Gastrocnemius medialis (tissue), 4 donors: ENCODE measurements at regions of chr16 and their contacts with region 1.

Region 1: GRCh38 chr16:67028555-67029248 is at the start of gene CBFB:
- DNase-seq: peak; percentile 86 to 90
- ATAC-seq: peak; percentile 87 to 88
- H3K4me3 ChIP-seq: peak within 1 kb of the TSS; percentile 70 to 92 (median 80)
- H3K27ac ChIP-seq: peak within 1 kb of the TSS; percentile 97 to 98 (median 98)
- H3K4me1 ChIP-seq: peaks cover 26 to 31% of the 10 kb centered on the region in 2 donors
- H3K27me3 ChIP-seq: no peaks in the 10 kb centered on the region
- CTCF ChIP-seq: peak in 1 of 5 experiments; percentile 4
- POLR2A ChIP-seq: peak; percentile 79 to 80
- total RNA-seq, gene CBFB: 38.9 to 105 (median 96.5) TPM

Region 2: GRCh38 chr16:66954097-66954659 is 74.5 kb before region 1 on chr16:
- in situ Hi-C with region 1: no loop called
- intact Hi-C with region 1: no loop called
- DNase-seq: peak; percentile 49 to 79
- ATAC-seq: peak; percentile 48 to 50
- H3K4me3 ChIP-seq: no peak overlapping the region
- H3K27ac ChIP-seq: peak overlapping the region; percentile 97 to 99 (median 97)
- H3K4me1 ChIP-seq: peaks cover 47 to 51% of the 10 kb centered on the region in 2 donors
- H3K27me3 ChIP-seq: no peaks in the 10 kb centered on the region
- CTCF ChIP-seq: peak; percentile 74 to 85 (median 81)
- POLR2A ChIP-seq: no peak

Region 3: DNA sequence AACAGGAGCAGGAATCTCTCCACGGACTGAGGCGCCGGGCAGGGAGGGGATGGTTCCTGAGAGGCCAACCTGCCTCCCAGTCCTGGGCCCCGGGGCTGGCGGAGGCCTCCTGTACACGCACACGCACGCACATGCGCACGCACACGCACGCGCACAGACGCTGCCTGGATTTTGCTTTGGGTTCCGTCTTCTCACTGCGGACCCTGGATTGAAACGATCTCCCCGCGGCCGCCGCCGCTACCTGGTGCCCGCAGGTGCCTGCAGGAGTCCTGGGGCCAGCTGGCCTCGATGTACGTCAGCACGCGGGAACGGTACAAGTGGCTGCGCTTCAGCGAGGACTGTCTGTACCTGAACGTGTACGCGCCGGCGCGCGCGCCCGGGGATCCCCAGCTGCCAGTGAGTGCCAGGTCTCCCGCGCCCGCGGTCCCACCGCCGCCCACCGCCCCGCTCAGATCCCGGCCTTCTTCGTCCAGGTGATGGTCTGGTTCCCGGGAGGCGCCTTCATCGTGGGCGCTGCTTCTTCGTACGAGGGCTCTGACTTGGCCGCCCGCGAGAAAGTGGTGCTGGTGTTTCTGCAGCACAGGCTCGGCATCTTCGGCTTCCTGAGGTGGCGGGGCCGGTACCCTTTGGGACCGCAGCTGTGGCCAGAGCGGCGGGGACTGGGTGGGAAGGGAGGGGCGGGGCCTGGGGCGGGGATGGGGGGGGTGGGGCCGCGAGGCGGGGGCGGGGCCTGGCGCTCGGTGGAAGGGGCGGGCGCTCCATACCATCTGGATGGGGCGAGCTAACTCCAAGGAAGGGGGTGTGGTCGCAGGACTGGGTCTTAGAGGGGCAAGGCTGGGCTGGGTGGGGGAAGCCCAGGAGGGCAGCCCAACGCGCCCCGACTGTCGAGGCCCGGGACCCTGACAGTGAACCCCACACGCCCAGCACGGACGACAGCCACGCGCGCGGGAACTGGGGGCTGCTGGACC is 28.0 kb before region 1 on chr16:
- in situ Hi-C with region 1: no loop called
- intact Hi-C with region 1: loop called (anchors 2 kb)
- DNase-seq: peak; percentile 68 to 74
- ATAC-seq: peak; percentile 19 to 22
- H3K4me3 ChIP-seq: peak overlapping the region; percentile 67 to 75 (median 69)
- H3K27ac ChIP-seq: peak overlapping the region; percentile 75 to 91 (median 75)
- H3K4me1 ChIP-seq: peaks cover 21 to 25% of the 10 kb centered on the region in 2 donors
- H3K27me3 ChIP-seq: peaks cover 0 to 6% (median 0%) of the 10 kb centered on the region in 3 donors
- CTCF ChIP-seq: no peak
- POLR2A ChIP-seq: peak; percentile 21 to 65

Region 4: DNA sequence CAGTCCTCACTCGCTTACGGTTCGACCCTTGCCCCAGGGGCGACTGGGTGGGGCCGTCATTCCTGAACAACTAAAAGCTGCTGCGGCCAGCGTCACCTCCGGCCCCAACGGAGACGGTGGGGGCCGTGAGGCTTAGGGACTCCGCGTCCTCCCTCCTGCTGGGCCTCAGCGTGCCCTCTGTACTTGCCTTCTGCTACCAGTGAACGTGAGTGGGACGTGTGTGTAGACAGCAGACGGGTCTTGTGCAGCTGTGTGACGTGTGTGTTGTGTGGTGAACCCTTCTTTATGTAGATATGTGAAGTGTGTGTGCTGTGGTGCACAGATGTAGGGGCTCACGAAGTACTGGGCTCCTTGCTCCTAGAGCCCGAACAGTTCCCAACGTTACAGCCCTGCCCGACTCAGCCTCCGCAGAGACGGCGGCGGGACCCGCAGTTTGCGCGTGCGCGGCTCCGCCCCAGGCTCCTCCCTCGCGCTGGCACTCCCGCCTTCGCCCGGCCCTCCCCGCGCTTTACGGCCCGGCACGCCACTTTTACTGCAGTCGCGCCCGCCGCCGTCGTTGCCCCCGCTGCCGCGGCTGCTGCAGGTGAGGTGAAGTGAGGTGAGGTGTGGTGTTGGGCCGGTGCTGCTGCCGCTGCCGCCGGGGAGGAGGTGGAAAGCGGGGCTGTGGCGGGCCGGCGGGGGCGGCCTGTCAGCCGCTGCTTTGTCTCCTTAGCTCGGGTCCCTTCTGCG is 80.9 kb after region 1 on chr16 and contains the start of gene PHAF1:
- in situ Hi-C with region 1: no loop called
- intact Hi-C with region 1: loop called (anchors 2 kb)
- DNase-seq: peak; percentile 88 to 93
- ATAC-seq: peak; percentile 84 to 91
- H3K4me3 ChIP-seq: peak within 1 kb of the TSS; percentile 85 to 97 (median 93)
- H3K27ac ChIP-seq: peak within 1 kb of the TSS; percentile 83 to 92 (median 89)
- H3K4me1 ChIP-seq: peaks cover 36 to 42% of the 10 kb centered on the region in 2 donors
- H3K27me3 ChIP-seq: no peaks in the 10 kb centered on the region
- CTCF ChIP-seq: no peak
- POLR2A ChIP-seq: peak; percentile 89 to 91
- total RNA-seq, gene PHAF1: 23.3 to 63.4 (median 48.9) TPM

Region 5: DNA sequence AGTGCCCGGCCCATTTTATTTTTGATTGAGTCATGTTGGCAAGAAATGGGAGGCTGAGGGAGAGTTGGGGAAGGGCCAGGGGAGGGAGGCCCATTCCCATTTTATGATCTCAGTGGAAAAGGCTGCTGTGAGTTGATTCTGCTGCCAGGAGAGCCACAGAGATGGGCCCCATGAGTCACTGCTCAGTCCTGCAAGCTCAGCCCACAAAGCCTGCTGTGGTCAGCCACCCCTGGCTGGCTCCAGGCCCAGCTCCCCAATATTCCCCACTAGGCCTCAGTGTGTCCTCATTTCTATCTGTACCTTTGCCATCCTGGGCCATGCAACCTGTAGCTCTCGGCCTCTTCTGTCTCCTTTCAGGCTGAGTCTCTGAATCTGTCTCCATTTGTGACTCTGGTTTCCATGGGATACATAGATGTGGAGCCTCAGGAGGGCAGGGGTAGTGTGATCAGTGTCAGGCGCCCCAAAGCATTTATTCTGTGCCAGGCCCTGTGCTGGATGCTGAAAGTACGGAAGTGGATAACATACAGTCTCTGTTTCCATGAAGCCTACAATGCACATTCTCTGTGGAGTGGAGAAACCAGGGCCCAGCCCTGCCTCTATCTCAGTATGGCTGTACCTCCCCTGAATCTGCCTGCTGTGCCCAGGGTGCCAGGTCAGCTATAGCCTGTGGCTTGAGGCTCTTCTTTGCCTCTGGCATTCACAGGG is 248.7 kb after region 1 on chr16:
- in situ Hi-C with region 1: no loop called
- intact Hi-C with region 1: no loop called
- DNase-seq: peak in 1 of 2 donors; percentile 38
- ATAC-seq: peak in 1 of 2 donors; percentile 39
- H3K4me3 ChIP-seq: no peak overlapping the region
- H3K27ac ChIP-seq: peak overlapping the region in 1 of 4 donors; percentile 45
- H3K4me1 ChIP-seq: no peaks in the 10 kb centered on the region
- H3K27me3 ChIP-seq: no peaks in the 10 kb centered on the region
- CTCF ChIP-seq: no peak
- POLR2A ChIP-seq: no peak